GM13977 (cell line): ENCODE measurements at regions of chr7 and their contacts with region 1.

Region 1: GRCh38 chr7:157010588-157011332 is at the start of gene MNX1:
- DNase-seq: peak; percentile 98
- CTCF ChIP-seq: no peak

Region 2: DNA sequence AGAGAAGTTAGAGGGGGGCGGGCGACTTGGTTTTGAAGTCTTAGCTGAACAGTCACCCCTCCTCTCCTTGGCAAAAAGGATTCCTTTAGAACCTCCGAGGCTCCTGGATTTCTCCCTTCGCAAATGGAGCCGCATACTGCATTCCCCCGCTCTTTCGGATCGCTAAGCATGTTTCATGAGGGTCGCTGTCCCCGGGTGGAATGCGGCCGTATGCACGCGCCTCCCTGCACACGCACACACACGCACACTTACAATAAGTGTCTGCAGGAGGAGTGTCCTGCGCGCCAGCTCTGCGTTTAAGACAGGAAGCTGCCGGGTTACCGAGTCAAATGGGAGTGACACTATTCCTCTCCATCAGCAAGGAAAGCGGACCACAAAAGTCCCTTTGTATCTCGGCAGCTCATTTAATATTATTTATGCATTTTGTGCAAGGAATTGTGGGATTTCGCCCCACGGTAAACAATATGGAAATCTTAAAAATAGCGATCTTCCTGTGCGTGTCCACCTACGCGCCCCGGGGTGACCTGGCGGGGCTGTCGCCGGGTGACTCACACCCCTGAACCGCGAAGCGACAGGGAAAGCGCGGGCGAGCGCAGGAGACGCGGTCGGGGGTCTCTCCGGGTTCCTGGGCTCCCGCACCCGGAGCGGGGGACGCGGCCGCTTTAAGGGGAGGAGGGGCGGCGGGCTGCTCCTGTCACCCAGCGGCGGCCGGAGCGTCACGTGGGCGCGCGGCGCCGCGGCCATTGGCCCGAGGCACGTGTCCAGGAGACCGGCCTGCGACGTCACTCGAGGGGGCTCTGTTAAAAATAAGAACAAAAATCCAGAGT is 1553.8 kb before region 1 on chr7:
- in situ Hi-C with region 1: loop called (anchors 25 kb)
- DNase-seq: peak; percentile 83
- CTCF ChIP-seq: no peak

Region 3: GRCh38 chr7:155796381-155797261 is 1214.1 kb before region 1 on chr7:
- in situ Hi-C with region 1: loop called (anchors 25 kb)
- DNase-seq: peak; percentile 89
- CTCF ChIP-seq: peak; percentile 97

Region 4: DNA sequence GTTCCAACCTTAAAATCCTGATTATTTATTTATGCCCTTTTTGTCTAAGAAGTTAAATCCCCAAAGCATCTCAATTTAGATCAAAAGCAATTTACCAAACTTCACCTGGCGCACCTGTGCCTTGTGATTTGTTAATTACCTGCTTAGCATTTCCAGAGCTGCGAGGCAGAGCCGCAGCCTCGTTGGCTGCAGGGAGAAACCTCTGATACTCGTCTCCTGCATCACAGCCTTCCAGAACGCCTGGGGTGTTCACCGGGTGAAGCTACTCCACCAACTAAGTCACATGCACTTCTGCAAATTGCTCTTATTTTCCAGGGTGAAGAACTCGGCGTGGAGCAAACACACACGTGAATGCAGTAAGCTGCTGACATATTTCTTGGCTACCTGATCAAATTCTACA is 568.2 kb before region 1 on chr7:
- in situ Hi-C with region 1: no loop called
- DNase-seq: no peak
- CTCF ChIP-seq: no peak

Region 5: GRCh38 chr7:157372235-157373232 is 361.8 kb after region 1 on chr7:
- in situ Hi-C with region 1: no loop called
- DNase-seq: no peak
- CTCF ChIP-seq: no peak